Left cardiac atrium (tissue), 4 donors: ENCODE measurements at regions of chr4 and their contacts with region 1.

Region 1: DNA sequence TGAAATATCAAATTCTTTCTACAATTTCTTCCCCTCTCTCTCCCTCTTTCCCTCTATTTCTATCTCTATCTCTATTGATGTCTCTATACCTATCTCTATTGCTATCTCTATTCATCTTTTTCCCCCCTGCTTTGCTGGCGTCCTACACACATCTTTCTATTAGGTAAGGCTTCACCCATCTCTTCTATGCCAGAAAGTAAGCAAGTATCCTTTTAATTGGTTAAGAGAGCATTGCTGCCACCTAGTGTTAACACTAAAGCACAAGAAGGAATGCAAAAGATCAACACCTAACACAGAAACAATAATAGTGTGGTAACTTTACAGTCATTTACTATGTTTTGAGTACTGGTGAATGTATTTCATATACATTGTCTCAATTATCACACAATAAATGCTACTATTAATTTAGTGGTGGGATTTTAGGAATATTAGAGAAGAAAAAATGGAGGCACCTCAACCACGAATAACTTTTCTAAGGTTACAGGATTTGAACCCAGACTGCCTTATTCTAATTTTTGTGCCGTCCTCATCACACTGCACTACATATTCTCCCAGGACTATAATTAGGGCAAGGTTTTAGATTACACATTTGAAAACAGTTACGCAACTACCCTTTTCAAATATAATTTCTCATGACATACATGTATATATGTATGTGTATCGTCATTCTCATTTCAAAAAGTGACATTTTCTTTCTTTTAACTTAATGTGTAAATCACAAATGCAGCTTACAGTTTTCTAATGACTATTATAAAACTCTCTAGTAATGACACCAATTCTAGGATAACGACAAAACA is 3.7 kb upstream of the C4orf36 start:
- DNase-seq: no peak
- ATAC-seq: peak; percentile 46 to 55

Region 2: DNA sequence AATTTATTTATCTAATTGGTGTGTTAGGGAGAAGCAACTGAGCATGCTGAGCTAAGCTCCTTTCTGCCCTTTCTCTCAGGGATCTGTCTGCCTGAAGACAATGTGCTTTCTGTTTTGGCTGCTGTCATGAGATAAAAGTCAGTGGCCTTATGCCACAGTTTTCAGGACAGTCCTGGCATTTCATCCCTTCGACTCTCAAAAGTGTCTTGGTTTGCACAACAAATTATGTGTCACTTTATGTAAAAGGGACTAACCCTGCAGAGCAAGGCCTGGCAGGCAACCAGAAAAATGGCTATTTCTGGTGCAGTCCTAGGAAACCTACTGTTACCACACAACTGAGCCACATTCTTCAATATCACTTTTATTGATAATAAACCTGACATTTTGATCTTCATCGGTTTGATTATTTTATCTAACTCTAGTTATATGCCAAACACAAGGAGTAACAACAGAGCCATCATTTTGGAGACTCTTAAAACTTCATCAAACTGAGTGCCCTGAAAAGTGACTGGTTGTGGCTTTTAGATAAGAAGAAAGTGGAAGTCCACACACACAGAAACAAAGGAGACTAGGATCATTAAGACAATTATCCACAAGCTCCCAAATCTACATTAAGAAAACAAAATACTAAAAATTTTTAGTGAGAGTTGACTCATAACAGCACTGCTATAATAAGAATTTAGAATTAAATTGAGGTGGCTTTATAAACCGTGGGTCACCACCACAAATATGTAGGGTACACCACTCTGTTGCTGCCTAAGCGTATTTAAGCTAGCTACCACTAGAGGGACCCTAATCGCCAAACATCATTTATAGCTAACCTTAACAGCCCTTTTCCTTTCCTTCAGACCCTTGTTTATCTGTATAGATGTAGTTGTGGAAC is 397.7 kb before region 1 on chr4:
- intact Hi-C with region 1: loop called (anchors 1 to 5 kb)
- DNase-seq: peak; percentile 32
- ATAC-seq: peak; percentile 87 to 88

Region 3: DNA sequence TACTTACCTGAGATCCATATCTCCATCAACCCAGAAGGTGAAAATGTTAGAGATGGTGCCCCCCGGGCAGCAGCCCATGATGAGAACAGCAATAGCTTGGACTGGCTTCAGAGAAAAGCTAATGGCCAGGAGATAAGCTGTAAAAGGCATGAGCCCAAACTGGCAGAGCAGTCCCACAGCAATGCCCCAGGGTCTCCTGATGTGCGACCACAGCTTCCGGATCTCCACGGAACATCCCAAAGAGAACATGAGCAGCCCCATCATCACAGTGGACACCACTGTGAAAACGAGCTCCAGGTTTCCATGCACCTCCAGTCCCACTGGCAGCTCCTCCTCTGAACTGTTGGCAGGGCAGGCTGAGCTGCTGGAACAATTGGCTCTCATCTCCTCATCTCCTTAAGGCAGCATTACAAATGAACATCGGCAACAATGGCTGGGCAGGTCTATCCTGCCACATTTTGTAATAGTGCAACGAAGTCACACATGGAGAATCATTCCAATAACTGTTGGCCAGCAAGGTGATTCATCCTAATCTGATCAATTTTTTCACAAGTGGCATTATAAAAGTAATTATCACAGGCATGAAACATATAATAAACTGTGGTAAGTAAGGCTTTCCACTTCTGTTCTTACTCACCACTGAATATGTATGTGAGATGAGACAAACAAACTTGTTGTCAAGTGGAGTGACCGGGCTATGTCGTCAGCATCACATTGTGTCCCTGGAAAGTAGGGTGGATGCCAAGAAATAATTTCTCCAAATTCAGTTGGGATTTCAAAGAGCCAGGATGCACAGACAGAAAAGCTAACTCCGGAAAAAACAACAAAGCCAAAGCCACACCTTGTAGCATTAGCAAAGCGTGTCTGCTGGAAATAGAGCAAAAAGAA is 46.9 kb before region 1 on chr4 and contains the start of gene SLC10A6:
- intact Hi-C with region 1: loop called in 1 of 2 experiments (anchors 5 kb)
- DNase-seq: no peak
- ATAC-seq: peak in 1 of 2 donors; percentile 36
- total RNA-seq, gene SLC10A6: 0.76 to 1.4 TPM

Region 4: GRCh38 chr4:87235020-87235671 is 339.3 kb after region 1 on chr4:
- intact Hi-C with region 1: no loop called
- DNase-seq: no peak
- ATAC-seq: peak in 1 of 2 donors; percentile 35